Upper lobe of right lung (tissue), 1 donor: ENCODE measurements at regions of chr9 and their contacts with region 1.

Region 1: GRCh38 chr9:96856363-96857286 is 2.3 kb upstream of the ZNF782 start:
- DNase-seq: peak; percentile 72
- ATAC-seq: peak; percentile 77
- H3K4me3 ChIP-seq: no peak overlapping the region
- H3K27ac ChIP-seq: no peak overlapping the region
- H3K4me1 ChIP-seq: peaks cover 21% of the 10 kb centered on the region
- H3K27me3 ChIP-seq: no peaks in the 10 kb centered on the region
- CTCF ChIP-seq: peak; percentile 93

Region 2: GRCh38 chr9:96020792-96021550 is 835.7 kb before region 1 on chr9:
- intact Hi-C with region 1: no loop called
- DNase-seq: peak; percentile 76
- ATAC-seq: peak; percentile 56
- H3K4me3 ChIP-seq: peak overlapping the region; percentile 67
- H3K27ac ChIP-seq: peak overlapping the region; percentile 76
- H3K4me1 ChIP-seq: peaks cover 23% of the 10 kb centered on the region
- H3K27me3 ChIP-seq: no peaks in the 10 kb centered on the region
- CTCF ChIP-seq: no peak

Region 3: GRCh38 chr9:97390791-97391406 is 534.3 kb after region 1 on chr9:
- intact Hi-C with region 1: loop called (anchors 5 kb)
- DNase-seq: no peak
- ATAC-seq: no peak
- H3K4me3 ChIP-seq: no peak overlapping the region
- H3K27ac ChIP-seq: no peak overlapping the region
- H3K4me1 ChIP-seq: peaks cover 5% of the 10 kb centered on the region
- H3K27me3 ChIP-seq: peaks cover 11% of the 10 kb centered on the region
- CTCF ChIP-seq: no peak